ENCODE measurements at regions of chr3 and their contacts with region 1.

Region 1: DNA sequence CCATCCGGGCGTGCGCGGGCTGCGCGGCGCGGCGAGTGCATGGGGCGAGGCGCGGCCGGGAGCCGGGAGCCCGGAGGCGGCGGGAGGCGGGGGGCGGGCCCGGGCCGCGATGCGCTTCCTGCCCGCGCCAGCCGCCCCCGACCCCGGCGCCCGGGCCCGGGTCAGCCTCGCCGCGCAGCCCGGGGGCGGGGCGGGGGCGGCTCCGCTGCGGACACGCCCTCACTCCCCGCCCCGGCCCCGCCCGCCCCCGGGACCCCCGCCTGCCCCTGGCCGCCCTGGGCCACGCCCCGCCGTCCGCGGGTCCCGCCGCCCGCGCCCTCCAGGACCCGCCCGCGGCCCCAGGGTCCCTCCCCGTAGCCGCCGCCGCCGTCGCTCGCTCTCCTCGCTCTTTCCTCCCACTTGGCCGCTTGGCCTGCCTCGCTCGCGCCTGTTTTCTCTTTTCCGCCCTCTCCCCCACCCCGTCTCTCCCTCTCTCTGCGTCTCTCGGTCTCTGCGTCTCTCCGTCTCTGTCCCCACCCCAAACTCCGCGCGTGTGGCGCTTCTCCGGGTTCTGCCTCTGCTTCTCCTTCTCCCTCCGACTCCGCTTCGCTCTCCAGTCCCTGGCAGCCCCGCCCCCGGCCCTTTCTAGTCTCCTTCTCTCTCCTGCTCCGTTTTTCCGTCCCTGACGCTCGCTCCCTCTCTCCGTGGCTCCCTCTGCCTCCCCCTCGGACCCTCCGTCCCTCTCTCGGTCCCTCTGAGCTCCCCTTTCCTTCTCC is at the start of gene PLXND1:
- DNase-seq: peak; percentile 73 to 96 (median 92)
- ATAC-seq: peak; percentile 73
- H3K4me3 ChIP-seq: peak within 1 kb of the TSS; percentile 48
- H3K27ac ChIP-seq: peak within 1 kb of the TSS; percentile 76
- H3K4me1 ChIP-seq: peaks cover 30 to 79% of the 10 kb centered on the region in 2 experiments; a peak in 4 of 5 replicates
- H3K27me3 ChIP-seq: no peaks in the 10 kb centered on the region
- CTCF ChIP-seq: no peak
- EP300 ChIP-seq: no peak
- POLR2A ChIP-seq: peak; percentile 71
- RAD21 ChIP-seq: no peak
- polyA plus RNA-seq, gene PLXND1: 0.34 to 0.70 TPM

Region 2: GRCh38 chr3:129383292-129383860 is 223.4 kb before region 1 on chr3:
- CTCF ChIA-PET with region 1: no interaction called
- POLR2A ChIA-PET with region 1: no interaction called
- in situ Hi-C with region 1: no loop called
- intact Hi-C with region 1: loop called (anchors 10 kb)
- DNase-seq: peak; percentile 66 to 76 (median 70)
- ATAC-seq: peak; percentile 96
- H3K4me3 ChIP-seq: no peak overlapping the region
- H3K27ac ChIP-seq: no peak overlapping the region
- H3K4me1 ChIP-seq: peaks cover 0 to 2% of the 10 kb centered on the region in 2 experiments; a peak in 3 of 5 replicates
- H3K27me3 ChIP-seq: no peaks in the 10 kb centered on the region
- CTCF ChIP-seq: peak; percentile 75 to 80 (median 79)
- EP300 ChIP-seq: no peak
- POLR2A ChIP-seq: no peak
- RAD21 ChIP-seq: peak; percentile 64 to 80; a peak in 3 of 4 replicates

Measured in K562 (cell line).